Naive thymus-derived CD8-positive, alpha-beta T cell (primary cell): ENCODE measurements at regions of chr14 and their contacts with region 1.

Region 1: GRCh38 chr14:22556990-22557623 is 31.9 kb downstream of the DAD1 start:
- DNase-seq: peak; percentile 78 to 99 (median 94)
- ATAC-seq: peak; percentile 10 to 20
- H3K4me3 Mint-ChIP-seq: peak overlapping the region; percentile 61 to 97 (median 80)
- H3K27ac Mint-ChIP-seq: peak overlapping the region; percentile 96 to 100 (median 99)
- H3K4me1 Mint-ChIP-seq: peaks cover 50 to 95% (median 90%) of the 10 kb centered on the region in 4 donors
- H3K27me3 Mint-ChIP-seq: peaks cover 0 to 4% (median 0%) of the 10 kb centered on the region in 5 donors

Region 2: DNA sequence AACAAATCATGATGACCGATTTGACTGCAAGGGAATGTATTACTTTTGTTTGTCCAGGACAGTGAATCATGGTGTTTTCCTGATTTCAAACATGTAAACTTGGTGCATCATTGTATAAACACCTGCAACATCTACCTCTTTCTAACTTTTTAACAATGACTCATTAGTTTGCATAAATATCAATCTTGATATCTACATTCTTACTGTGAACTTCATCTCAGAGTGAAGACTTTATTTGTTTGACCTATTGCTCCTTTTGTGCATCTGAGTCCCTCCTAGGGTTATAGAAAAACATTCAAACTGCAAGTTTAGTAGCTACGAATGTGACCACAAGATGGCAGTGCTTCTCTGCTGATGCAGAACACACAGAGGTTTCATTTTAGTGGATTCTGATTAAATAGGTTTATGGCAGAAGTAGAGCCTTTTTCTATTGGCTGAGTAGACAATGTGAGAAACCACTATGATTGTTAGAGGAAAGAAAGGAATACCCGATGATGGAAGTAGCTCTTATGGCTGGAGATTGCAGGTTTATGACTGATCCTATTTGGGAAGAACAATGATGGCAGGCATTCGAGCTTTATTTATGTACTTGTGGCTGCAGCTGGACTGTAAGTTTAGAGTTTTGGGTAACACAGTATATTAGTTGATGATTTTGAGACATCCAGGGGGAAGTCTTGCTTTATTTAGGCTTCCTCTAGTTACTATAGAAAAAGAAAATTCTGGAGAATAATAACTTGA is 639.2 kb before region 1 on chr14:
- POLR2A ChIA-PET with region 1: interaction called, 10 read pairs
- DNase-seq: peak in 9 of 10 donors; percentile 37 to 80 (median 64)
- ATAC-seq: peak; percentile 65 to 70
- H3K4me3 Mint-ChIP-seq: peak overlapping the region; percentile 64 to 89 (median 81)
- H3K27ac Mint-ChIP-seq: peak overlapping the region; percentile 3 to 91 (median 82)
- H3K4me1 Mint-ChIP-seq: peaks cover 12 to 73% (median 50%) of the 10 kb centered on the region in 4 donors
- H3K27me3 Mint-ChIP-seq: no peaks in the 10 kb centered on the region

Region 3: GRCh38 chr14:22122227-22122818 is 434.8 kb before region 1 on chr14:
- POLR2A ChIA-PET with region 1: interaction called, 11 read pairs
- DNase-seq: peak in 3 of 10 donors; percentile 19 to 36 (median 34)
- ATAC-seq: peak; percentile 56 to 59
- H3K4me3 Mint-ChIP-seq: peak overlapping the region; percentile 61 to 91 (median 84)
- H3K27ac Mint-ChIP-seq: peak overlapping the region; percentile 35 to 98 (median 89)
- H3K4me1 Mint-ChIP-seq: peaks cover 7 to 16% (median 14%) of the 10 kb centered on the region in 4 donors
- H3K27me3 Mint-ChIP-seq: no peaks in the 10 kb centered on the region

Region 4: DNA sequence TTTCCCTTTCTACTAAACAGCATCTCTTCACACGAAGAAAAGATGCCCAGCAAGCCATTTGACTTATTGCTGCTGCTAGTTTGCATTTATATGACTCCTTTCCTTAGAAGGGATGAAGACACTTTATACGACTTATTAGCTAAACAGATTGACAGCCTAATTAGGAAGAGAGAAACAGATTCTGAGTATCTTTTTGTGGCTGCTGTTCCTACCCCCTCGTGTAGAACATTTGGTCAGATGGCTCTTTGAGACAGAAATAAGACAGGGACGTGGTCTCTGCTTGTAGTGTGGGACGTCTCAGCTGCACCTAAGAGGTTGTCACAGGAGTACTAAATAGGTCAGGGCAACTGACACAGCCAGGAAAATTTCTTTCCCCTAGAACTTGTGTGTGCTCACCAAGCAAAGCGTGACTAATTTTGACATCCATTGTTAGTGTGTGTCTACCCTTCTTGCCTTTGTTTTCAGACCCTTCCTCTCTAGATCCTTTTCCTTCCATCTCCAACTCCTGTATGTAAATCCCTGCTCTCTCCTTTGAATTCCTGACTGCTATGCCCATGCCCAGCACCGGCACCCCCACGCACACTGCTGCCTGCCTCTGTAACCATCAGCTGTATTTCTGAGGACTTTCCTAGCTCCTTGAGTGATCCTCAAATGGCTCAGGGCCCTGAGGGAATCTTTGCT is 51.3 kb before region 1 on chr14:
- POLR2A ChIA-PET with region 1: interaction called, 760 read pairs
- DNase-seq: peak in 1 of 10 donors; percentile 26
- ATAC-seq: peak in 1 of 2 donors; percentile 38
- H3K4me3 Mint-ChIP-seq: peak overlapping the region; percentile 79 to 94 (median 86)
- H3K27ac Mint-ChIP-seq: peak overlapping the region; percentile 86 to 99 (median 98)
- H3K4me1 Mint-ChIP-seq: peaks cover 13 to 69% (median 57%) of the 10 kb centered on the region in 4 donors
- H3K27me3 Mint-ChIP-seq: no peaks in the 10 kb centered on the region

Region 5: DNA sequence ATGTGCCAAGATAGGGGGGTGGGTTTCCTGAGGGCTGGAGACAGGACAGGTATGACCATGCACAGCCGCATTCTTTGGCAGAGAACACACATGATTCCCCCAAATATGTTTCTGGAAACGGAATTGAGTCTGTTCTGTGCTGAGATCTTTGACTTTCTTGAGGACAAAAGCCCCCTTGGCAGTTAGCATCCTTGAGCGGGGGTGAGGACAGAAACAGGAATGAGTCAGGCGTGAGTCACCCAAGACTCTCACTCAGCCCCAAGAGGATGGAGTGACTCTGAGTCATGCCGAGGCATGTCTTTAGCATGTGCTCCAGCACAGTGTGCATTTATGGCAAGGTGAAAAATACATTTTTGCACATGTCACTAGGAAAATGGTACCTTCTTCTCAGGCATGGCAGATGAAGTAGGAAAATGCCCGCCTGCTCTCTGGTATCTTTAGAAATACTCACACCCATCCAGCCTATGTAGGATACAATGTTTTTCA is 20.2 kb before region 1 on chr14:
- POLR2A ChIA-PET with region 1: interaction called, 879 read pairs
- DNase-seq: peak in 5 of 10 donors; percentile 47 to 86 (median 69)
- ATAC-seq: peak; percentile 74 to 81
- H3K4me3 Mint-ChIP-seq: peak overlapping the region; percentile 70 to 89 (median 83)
- H3K27ac Mint-ChIP-seq: peak overlapping the region; percentile 90 to 100 (median 97)
- H3K4me1 Mint-ChIP-seq: peaks cover 57 to 96% (median 94%) of the 10 kb centered on the region in 4 donors
- H3K27me3 Mint-ChIP-seq: no peaks in the 10 kb centered on the region

Region 6: DNA sequence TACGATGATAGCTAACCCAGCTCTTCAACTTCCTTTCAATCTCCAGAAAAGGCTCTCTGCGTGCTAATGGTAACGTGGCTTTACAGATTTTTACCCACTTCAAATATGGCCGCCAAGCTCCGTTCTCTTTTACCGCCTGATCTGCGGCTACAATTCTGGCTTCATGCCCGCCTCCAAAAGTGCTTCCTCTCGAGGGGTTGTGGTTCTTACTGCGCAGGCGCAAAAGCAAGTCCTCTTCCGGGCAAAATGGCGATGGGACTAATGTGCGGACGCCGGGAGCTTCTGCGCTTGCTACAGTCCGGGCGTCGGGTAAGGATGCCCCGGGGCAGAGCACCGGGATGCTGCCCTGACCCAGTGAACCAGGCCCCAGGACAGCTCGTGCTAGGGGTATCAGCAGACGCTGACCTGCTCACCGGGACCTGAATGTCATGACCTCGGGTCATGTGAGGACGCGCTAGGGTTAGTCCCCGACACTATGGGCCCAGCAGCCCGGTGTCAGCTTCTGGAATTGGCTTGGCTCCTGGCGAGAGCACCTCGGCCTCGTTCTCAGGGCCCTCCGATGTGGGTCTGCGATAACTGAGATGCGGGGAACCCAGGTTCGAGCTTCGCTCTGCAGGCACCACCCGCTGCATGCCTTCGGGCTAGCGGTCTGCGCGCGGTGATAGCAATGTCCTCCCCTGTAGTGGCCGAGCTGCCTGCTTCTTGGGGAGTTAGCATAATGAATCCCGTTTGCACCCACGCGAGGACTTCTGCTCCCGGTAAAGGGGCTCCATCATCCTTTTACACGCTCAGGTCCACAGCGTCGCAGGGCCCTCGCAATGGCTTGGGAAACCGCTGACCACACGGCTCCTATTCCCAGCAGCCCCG is 209.6 kb after region 1 on chr14 and contains the start of gene OXA1L:
- POLR2A ChIA-PET with region 1: interaction called, 11 read pairs
- DNase-seq: peak; percentile 84 to 99 (median 96)
- ATAC-seq: peak; percentile 92 to 93
- H3K4me3 Mint-ChIP-seq: peak within 1 kb of the TSS; percentile 86 to 97 (median 91)
- H3K27ac Mint-ChIP-seq: peak within 1 kb of the TSS; percentile 94 to 98 (median 98)
- H3K4me1 Mint-ChIP-seq: peaks cover 21 to 36% (median 33%) of the 10 kb centered on the region in 4 donors
- H3K27me3 Mint-ChIP-seq: no peaks in the 10 kb centered on the region
- polyA plus RNA-seq, gene OXA1L: 56.3 to 67.4 (median 57.1) TPM